ENCODE measurements at regions of chr1 and their contacts with region 1.

Region 1: DNA sequence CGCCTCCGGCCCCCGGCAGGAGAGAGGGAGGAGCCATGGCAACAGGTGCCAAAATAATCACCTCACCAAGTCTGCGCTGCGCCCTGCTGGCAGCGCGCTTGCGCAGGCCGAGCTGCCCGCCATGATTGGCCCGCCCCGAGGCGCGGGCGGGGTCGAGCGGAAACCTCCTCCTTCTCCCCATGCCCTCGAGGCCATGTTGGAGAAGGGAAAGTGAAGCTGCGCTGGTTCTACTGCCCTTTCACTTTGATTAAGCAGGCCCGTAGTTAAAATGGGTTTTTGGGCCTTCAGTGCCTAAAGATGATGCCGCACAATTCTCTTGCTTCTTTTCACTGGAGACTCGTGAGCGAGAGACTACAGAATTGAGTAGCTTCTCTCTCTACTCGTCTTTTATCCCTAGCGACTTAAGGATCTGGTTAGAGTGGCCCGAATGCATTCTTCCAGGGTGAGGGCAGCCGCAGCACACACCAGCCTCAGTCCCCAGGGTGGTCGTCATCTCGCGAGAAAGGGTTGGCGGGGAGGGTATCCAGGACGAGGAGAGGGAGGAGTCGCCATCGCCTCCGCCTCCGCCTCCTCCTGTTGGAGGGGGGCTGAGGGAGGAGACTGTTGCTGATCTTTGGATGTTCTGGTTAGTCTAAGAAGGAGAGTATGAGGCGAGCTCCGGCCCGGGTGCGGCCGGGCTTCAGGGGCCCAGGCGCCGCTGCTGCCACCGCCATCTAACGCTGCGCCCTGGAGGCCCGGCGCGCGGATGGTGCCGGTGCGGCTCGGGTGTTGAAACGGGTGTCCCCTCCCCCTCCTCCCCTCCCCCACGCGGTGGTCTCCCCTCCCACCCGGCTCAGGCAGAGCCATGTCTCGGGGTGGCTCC is at the start of gene DCAF6:
- DNase-seq: peak; percentile 99
- H3K4me3 Mint-ChIP-seq: peak within 1 kb of the TSS; percentile 97
- H3K27ac Mint-ChIP-seq: peak within 1 kb of the TSS; percentile 98
- H3K4me1 Mint-ChIP-seq: peaks cover 33% of the 10 kb centered on the region
- H3K27me3 Mint-ChIP-seq: no peaks in the 10 kb centered on the region
- total RNA-seq, gene DCAF6: 20.6 and 24.1 TPM in 2 replicates

Region 2: GRCh38 chr1:167517535-167518330 is 418.6 kb before region 1 on chr1:
- intact Hi-C with region 1: loop called (anchors 5 kb)
- DNase-seq: peak; percentile 93
- H3K4me3 Mint-ChIP-seq: peak overlapping the region; percentile 99
- H3K27ac Mint-ChIP-seq: peak overlapping the region; percentile 100
- H3K4me1 Mint-ChIP-seq: peaks cover 39% of the 10 kb centered on the region
- H3K27me3 Mint-ChIP-seq: peaks cover 7% of the 10 kb centered on the region

Region 3: GRCh38 chr1:167627865-167628641 is 308.2 kb before region 1 on chr1:
- intact Hi-C with region 1: loop called (anchors 2 kb)
- DNase-seq: peak; percentile 95
- H3K4me3 Mint-ChIP-seq: peak overlapping the region; percentile 94
- H3K27ac Mint-ChIP-seq: peak overlapping the region; percentile 92
- H3K4me1 Mint-ChIP-seq: peaks cover 57% of the 10 kb centered on the region
- H3K27me3 Mint-ChIP-seq: no peaks in the 10 kb centered on the region

Region 4: GRCh38 chr1:167687919-167688519 is 248.3 kb before region 1 on chr1:
- intact Hi-C with region 1: no loop called
- DNase-seq: peak; percentile 94
- H3K4me3 Mint-ChIP-seq: no peak overlapping the region
- H3K27ac Mint-ChIP-seq: peak overlapping the region; percentile 56
- H3K4me1 Mint-ChIP-seq: peaks cover 19% of the 10 kb centered on the region
- H3K27me3 Mint-ChIP-seq: no peaks in the 10 kb centered on the region

Region 5: DNA sequence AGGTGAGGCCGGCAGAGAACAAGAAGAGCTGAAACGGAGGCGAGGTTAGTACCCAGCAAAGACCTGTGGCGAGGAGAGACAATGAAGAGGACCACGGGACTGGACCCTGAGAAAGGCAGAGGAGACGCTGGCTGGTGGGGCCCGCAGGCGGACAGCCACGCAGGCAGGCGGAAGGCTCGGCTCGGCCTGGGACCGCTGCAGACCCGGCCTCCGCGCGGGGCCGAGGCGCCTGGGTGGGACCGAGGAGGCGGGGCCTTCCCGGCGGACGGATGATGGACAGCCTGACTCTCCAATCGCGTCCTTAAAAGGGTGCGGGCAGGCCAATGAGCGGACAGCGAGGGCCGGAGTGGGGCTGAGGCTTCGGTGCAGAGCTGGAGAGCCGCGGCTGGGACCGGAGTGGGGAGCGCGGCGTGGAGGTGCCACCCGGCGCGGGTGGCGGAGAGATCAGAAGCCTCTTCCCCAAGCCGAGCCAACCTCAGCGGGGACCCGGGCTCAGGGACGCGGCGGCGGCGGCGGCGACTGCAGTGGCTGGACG is 214.6 kb before region 1 on chr1 and contains the start of gene MPZL1:
- intact Hi-C with region 1: loop called (anchors 2 kb)
- DNase-seq: peak; percentile 99
- H3K4me3 Mint-ChIP-seq: peak within 1 kb of the TSS; percentile 96
- H3K27ac Mint-ChIP-seq: peak within 1 kb of the TSS; percentile 94
- H3K4me1 Mint-ChIP-seq: peaks cover 66% of the 10 kb centered on the region
- H3K27me3 Mint-ChIP-seq: no peaks in the 10 kb centered on the region
- total RNA-seq, gene MPZL1: 39.3 and 41.8 TPM in 2 replicates

Region 6: GRCh38 chr1:167904652-167905130 is 31.6 kb before region 1 on chr1:
- intact Hi-C with region 1: no loop called
- DNase-seq: peak; percentile 47
- H3K4me3 Mint-ChIP-seq: no peak overlapping the region
- H3K27ac Mint-ChIP-seq: no peak overlapping the region
- H3K4me1 Mint-ChIP-seq: peaks cover 2% of the 10 kb centered on the region
- H3K27me3 Mint-ChIP-seq: peaks cover 8% of the 10 kb centered on the region

Region 7: DNA sequence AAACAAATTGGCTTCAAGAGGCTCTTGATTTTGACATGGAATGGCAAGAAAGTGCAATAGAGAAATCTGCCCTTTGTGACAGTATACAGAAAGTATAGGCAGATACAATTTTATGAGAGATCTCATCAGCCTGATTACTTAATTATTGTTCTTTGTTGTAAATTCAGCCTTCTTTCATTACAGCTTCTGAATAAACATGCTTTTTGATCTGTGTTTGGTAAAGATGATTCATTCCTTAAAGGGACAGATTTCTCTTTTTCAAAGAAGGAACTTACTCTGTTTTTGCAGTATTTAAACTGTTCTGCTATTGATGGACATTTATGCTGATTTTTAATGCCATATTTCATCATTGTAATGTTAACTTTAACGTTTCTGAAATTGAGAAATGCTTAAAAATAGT is 14.3 kb after region 1 on chr1:
- intact Hi-C with region 1: loop called (anchors 1 kb)
- DNase-seq: no peak
- H3K4me3 Mint-ChIP-seq: no peak overlapping the region
- H3K27ac Mint-ChIP-seq: no peak overlapping the region
- H3K4me1 Mint-ChIP-seq: peaks cover 27% of the 10 kb centered on the region
- H3K27me3 Mint-ChIP-seq: no peaks in the 10 kb centered on the region

Region 8: GRCh38 chr1:167973832-167974231 is 37.5 kb after region 1 on chr1:
- intact Hi-C with region 1: no loop called
- DNase-seq: no peak
- H3K4me3 Mint-ChIP-seq: no peak overlapping the region
- H3K27ac Mint-ChIP-seq: no peak overlapping the region
- H3K4me1 Mint-ChIP-seq: peaks cover 2% of the 10 kb centered on the region
- H3K27me3 Mint-ChIP-seq: no peaks in the 10 kb centered on the region

Region 9: GRCh38 chr1:168082008-168082876 is 145.9 kb after region 1 on chr1:
- intact Hi-C with region 1: loop called (anchors 5 kb)
- DNase-seq: peak; percentile 91
- H3K4me3 Mint-ChIP-seq: no peak overlapping the region
- H3K27ac Mint-ChIP-seq: no peak overlapping the region
- H3K4me1 Mint-ChIP-seq: peaks cover 3% of the 10 kb centered on the region
- H3K27me3 Mint-ChIP-seq: no peaks in the 10 kb centered on the region

Region 10: GRCh38 chr1:168234846-168235547 is 298.7 kb after region 1 on chr1:
- intact Hi-C with region 1: loop called (anchors 5 kb)
- DNase-seq: peak; percentile 85
- H3K4me3 Mint-ChIP-seq: peak overlapping the region; percentile 52
- H3K27ac Mint-ChIP-seq: peak overlapping the region; percentile 92
- H3K4me1 Mint-ChIP-seq: peaks cover 67% of the 10 kb centered on the region
- H3K27me3 Mint-ChIP-seq: no peaks in the 10 kb centered on the region